ENCODE measurements at regions of chr3 and their contacts with region 1.

Region 1: GRCh38 chr3:141738022-141738890 is at the start of gene RNF7:
- DNase-seq: peak; percentile 97
- ATAC-seq: peak; percentile 95
- H3K4me3 Mint-ChIP-seq: peak within 1 kb of the TSS; percentile 86
- H3K27ac Mint-ChIP-seq: peak within 1 kb of the TSS; percentile 100
- H3K4me1 Mint-ChIP-seq: peaks cover 37% of the 10 kb centered on the region
- H3K27me3 Mint-ChIP-seq: no peaks in the 10 kb centered on the region
- total RNA-seq, gene RNF7: 53.4 to 67.0 TPM

Region 2: DNA sequence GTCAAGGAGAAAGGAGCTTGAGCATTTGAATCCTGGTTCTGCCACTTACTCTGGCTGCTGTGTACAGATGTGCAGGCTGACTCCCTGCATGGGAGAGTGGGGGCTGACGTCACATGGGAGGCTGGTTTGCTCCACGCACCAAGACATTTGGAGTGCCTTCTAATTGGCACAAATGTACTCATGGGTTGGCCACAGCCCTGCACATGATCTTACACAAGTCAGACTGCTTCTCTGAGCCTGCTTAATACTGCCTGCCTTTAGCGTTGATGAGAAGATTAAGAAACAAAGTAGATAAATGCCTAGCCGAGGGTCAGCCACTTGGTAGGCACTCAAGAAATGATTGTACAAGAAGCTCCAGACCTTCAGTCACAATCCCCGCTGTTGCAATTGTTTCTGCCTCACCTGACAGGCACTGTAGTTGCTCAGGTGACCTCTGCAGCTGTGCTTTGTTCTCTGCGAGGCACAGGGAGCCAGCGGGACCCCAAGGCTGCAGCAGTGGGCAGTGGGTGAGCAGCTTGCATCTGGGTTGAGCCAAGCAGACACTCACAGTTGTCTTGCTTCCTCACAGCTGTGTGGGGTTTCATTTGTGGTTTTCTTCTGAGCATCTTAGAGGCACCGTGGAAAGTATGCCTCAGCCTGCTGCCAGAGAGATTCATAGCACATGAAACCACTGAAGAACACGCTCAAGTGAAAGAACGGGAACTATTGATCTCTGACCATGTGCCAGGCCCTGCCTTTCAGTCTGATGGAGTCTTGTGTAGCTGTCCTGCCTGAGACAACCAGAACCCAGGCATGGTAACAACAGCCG is 58.0 kb after region 1 on chr3:
- CTCF ChIA-PET with region 1: interaction called, 12 read pairs
- DNase-seq: peak; percentile 91
- ATAC-seq: peak; percentile 85
- H3K4me3 Mint-ChIP-seq: peak overlapping the region; percentile 84
- H3K27ac Mint-ChIP-seq: peak overlapping the region; percentile 98
- H3K4me1 Mint-ChIP-seq: peaks cover 42% of the 10 kb centered on the region
- H3K27me3 Mint-ChIP-seq: no peaks in the 10 kb centered on the region

Region 3: DNA sequence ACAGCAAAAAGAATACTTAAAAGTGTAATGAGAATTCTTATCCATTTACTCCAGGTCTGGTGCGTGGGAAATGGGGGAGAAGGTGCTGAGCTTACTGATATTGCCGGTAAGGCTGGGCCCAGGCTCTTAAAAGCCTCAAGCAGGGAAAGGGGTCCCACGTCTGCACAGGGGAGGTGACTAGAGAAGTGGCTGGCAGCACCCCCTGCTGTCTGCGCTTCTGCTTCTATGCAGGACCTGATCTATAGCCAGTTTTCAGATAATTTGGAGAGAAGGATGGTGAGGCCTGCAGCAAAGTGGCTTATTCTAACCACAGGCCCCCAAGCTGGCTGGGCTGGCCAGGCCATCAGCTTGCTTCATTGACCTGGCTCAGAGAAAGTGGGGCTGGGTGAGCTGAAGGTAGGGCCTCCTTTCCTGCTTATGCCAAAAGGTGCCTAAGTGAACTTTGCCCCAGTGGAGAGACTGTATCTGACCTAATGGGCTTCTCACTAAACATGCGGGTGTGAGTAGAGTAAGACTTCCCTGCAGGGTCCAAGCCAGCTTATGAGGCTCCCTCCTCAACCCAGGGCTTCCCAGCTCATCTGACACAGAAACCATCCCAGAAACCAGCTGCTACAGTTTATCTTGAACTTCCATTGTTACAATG is 107.3 kb after region 1 on chr3:
- CTCF ChIA-PET with region 1: interaction called, 16 read pairs
- DNase-seq: peak; percentile 52
- ATAC-seq: peak; percentile 20
- H3K4me3 Mint-ChIP-seq: no peak overlapping the region
- H3K27ac Mint-ChIP-seq: no peak overlapping the region
- H3K4me1 Mint-ChIP-seq: peaks cover 10% of the 10 kb centered on the region
- H3K27me3 Mint-ChIP-seq: no peaks in the 10 kb centered on the region

Region 4: GRCh38 chr3:141875374-141875892 is 137.2 kb after region 1 on chr3:
- CTCF ChIA-PET with region 1: interaction called, 38 read pairs
- DNase-seq: peak; percentile 91
- ATAC-seq: peak; percentile 63
- H3K4me3 Mint-ChIP-seq: peak overlapping the region; percentile 90
- H3K27ac Mint-ChIP-seq: peak overlapping the region; percentile 95
- H3K4me1 Mint-ChIP-seq: peaks cover 30% of the 10 kb centered on the region
- H3K27me3 Mint-ChIP-seq: no peaks in the 10 kb centered on the region

Region 5: GRCh38 chr3:141913150-141913811 is 175.0 kb after region 1 on chr3:
- CTCF ChIA-PET with region 1: interaction called, 11 read pairs
- DNase-seq: peak; percentile 69
- ATAC-seq: peak; percentile 78
- H3K4me3 Mint-ChIP-seq: no peak overlapping the region
- H3K27ac Mint-ChIP-seq: peak overlapping the region; percentile 50
- H3K4me1 Mint-ChIP-seq: peaks cover 9% of the 10 kb centered on the region
- H3K27me3 Mint-ChIP-seq: no peaks in the 10 kb centered on the region

Measured in activated CD8-positive, alpha-beta memory T cell treated with anti-CD3 and anti-CD28 coated beads, Interleukin-2, amount 10 ng/mL, durations not matched to agents 7 days and 5 days (primary cell).